T-cell (primary cell): ENCODE measurements at regions of chr6 and their contacts with region 1.

Region 1: DNA sequence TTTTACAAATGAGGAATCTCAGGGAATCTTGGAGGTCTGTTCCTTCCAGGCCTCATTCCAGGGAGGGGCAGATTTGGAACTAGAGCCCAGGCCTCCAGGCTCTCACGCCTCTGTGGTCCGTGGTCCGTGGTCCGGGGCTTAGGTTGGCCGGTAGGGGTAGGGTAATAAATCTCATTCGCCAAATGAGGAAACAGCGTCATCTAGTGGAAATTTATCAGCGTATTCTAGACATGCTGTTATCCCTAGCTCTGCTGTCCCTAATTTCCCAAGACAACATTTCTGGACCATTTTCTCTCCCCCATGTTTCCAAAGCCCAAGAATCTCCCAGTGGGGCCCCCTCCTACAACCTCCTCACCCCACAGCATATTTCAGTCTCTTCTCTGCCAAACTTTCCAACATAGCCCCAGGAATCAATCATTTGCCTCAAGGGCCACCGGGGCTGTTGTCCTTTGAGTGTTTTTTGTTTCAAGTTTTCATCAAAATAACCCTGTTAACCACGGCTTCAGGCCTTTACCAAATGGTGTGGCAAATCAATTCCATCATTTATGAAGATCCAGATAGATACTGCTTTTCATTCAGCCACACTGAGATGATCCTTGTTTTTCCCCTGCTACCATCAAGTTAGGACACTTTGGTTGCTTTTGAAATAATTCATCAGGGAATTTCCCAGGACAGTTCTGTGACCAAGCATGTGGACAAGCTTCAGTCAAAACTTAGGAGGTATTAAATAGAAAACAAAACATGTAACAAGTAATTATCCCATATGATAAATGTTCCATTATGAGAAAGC is 126.8 kb downstream of the ALDH8A1 start:
- DNase-seq: peak in 15 of 35 experiments; percentile 0 to 74 (median 6)
- ATAC-seq: peak; percentile 54 to 91 (median 78)
- H3K4me3 ChIP-seq: no peak overlapping the region
- H3K4me3 Mint-ChIP-seq: no peak overlapping the region
- H3K27ac ChIP-seq: no peak overlapping the region
- H3K27ac Mint-ChIP-seq: no peak overlapping the region
- H3K4me1 ChIP-seq: peaks cover 0 to 2% of the 10 kb centered on the region in 2 experiments
- H3K4me1 Mint-ChIP-seq: peaks cover 0 to 2% (median 0%) of the 10 kb centered on the region in 3 donors
- H3K27me3 ChIP-seq: no peaks in the 10 kb centered on the region
- H3K27me3 Mint-ChIP-seq: peaks cover 0 to 6% of the 10 kb centered on the region in 2 donors

Region 2: GRCh38 chr6:134111062-134111677 is 711.9 kb before region 1 on chr6:
- CTCF ChIA-PET with region 1: interaction called, 3 to 10 read pairs
- POLR2A ChIA-PET with region 1: no interaction called
- DNase-seq: peak in 27 of 35 experiments; percentile 7 to 78 (median 25)
- ATAC-seq: peak; percentile 43 to 57 (median 49)
- H3K4me3 ChIP-seq: no peak overlapping the region
- H3K4me3 Mint-ChIP-seq: no peak overlapping the region
- H3K27ac ChIP-seq: no peak overlapping the region
- H3K27ac Mint-ChIP-seq: no peak overlapping the region
- H3K4me1 ChIP-seq: no peaks in the 10 kb centered on the region
- H3K4me1 Mint-ChIP-seq: peaks cover 0 to 9% (median 3%) of the 10 kb centered on the region in 3 donors
- H3K27me3 ChIP-seq: peaks cover 0 to 18% of the 10 kb centered on the region in 2 experiments
- H3K27me3 Mint-ChIP-seq: peaks cover 15 to 20% of the 10 kb centered on the region in 2 donors

Region 3: DNA sequence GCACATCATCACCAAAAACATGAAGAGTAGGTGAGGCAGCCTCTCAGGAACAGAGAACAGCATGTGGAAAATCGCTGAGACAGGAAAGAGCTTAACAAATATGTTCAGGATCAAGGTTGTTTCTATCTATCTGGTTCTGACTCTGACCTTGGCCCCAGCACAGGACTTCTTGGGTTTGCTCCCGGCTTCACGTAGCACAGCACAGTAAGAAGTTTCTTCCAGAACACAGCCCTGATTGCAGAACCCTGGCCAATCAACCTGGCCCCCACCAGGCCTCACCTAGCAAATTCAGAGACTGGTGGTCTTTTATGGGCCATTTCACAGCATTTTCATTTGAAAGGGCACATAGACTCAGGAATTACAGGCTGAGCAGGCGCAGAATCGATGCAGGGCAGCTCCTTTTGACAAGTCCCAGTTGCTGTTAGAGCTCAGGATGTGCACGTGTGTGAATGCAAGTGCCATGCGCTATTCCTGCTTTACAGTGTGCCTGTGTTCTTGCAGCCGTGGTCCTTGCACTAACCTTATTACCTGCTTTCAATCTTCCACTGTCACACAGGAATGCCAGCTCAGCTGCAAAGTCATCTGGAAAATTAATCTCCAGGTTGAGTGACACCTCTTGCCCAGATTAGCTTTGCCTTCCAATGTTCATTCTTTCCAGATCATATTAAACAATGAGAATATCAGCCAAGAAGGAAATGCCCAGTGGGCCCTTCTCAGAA is 670.2 kb before region 1 on chr6:
- CTCF ChIA-PET with region 1: interaction called, 6 to 27 read pairs
- POLR2A ChIA-PET with region 1: no interaction called
- DNase-seq: no peak
- ATAC-seq: no peak
- H3K4me3 ChIP-seq: no peak overlapping the region
- H3K4me3 Mint-ChIP-seq: no peak overlapping the region
- H3K27ac ChIP-seq: no peak overlapping the region
- H3K27ac Mint-ChIP-seq: no peak overlapping the region
- H3K4me1 ChIP-seq: no peaks in the 10 kb centered on the region
- H3K4me1 Mint-ChIP-seq: no peaks in the 10 kb centered on the region
- H3K27me3 ChIP-seq: peaks cover 0 to 3% of the 10 kb centered on the region in 2 experiments
- H3K27me3 Mint-ChIP-seq: peaks cover 0 to 2% of the 10 kb centered on the region in 2 donors

Region 4: DNA sequence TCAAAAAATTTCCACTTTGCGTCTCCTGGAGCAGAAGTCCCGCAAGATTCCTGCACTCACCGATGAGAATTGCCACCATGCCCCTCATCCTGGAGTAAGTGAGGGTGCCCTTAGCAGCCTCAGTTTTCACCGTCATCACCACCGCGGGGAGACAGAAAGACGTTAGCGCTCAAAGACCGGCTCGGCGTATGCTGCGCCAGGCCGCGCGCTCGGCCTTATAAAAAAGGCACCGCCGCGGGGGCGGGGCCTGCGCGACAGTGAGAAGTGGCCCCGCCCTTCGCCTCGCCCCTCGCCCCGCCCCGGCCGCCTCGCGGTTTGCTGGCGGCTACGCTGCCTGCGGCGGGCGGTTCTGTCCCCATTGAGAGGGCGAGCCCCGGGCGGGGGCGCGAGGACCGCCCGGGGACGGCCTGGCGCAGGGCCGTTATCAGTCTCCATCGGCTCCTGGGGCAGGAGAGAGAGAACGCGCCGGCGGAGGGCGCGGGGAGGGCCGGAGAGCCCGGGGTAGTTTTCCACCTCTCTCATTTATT is 648.4 kb before region 1 on chr6:
- CTCF ChIA-PET with region 1: interaction called in 1 of 2 experiments, 13 read pairs
- POLR2A ChIA-PET with region 1: interaction called in 1 of 2 experiments, 3 read pairs
- DNase-seq: peak; percentile 78 to 97 (median 92)
- ATAC-seq: peak; percentile 75 to 87 (median 80)
- H3K4me3 ChIP-seq: peak overlapping the region; percentile 66 to 78
- H3K4me3 Mint-ChIP-seq: peak overlapping the region; percentile 94 to 99 (median 97)
- H3K27ac ChIP-seq: peak overlapping the region; percentile 82
- H3K27ac Mint-ChIP-seq: peak overlapping the region; percentile 95 to 98
- H3K4me1 ChIP-seq: peaks cover 50 to 57% of the 10 kb centered on the region in 2 experiments
- H3K4me1 Mint-ChIP-seq: peaks cover 74 to 81% (median 75%) of the 10 kb centered on the region in 3 donors
- H3K27me3 ChIP-seq: no peaks in the 10 kb centered on the region
- H3K27me3 Mint-ChIP-seq: no peaks in the 10 kb centered on the region

Region 5: GRCh38 chr6:134657751-134658522 is 165.2 kb before region 1 on chr6:
- CTCF ChIA-PET with region 1: interaction called in 1 of 2 experiments, 10 read pairs
- POLR2A ChIA-PET with region 1: no interaction called
- DNase-seq: no peak
- ATAC-seq: no peak
- H3K4me3 ChIP-seq: no peak overlapping the region
- H3K4me3 Mint-ChIP-seq: no peak overlapping the region
- H3K27ac ChIP-seq: no peak overlapping the region
- H3K27ac Mint-ChIP-seq: no peak overlapping the region
- H3K4me1 ChIP-seq: no peaks in the 10 kb centered on the region
- H3K4me1 Mint-ChIP-seq: peaks cover 0 to 3% (median 0%) of the 10 kb centered on the region in 3 donors
- H3K27me3 ChIP-seq: peaks cover 0 to under 1% of the 10 kb centered on the region in 2 experiments
- H3K27me3 Mint-ChIP-seq: peaks cover 0 to 4% of the 10 kb centered on the region in 2 donors

Region 6: GRCh38 chr6:134757911-134758361 is 65.2 kb before region 1 on chr6:
- CTCF ChIA-PET with region 1: no interaction called
- POLR2A ChIA-PET with region 1: no interaction called
- DNase-seq: no peak
- ATAC-seq: no peak
- H3K4me3 ChIP-seq: no peak overlapping the region
- H3K4me3 Mint-ChIP-seq: no peak overlapping the region
- H3K27ac ChIP-seq: no peak overlapping the region
- H3K27ac Mint-ChIP-seq: no peak overlapping the region
- H3K4me1 ChIP-seq: peaks cover 0 to 1% of the 10 kb centered on the region in 2 experiments
- H3K4me1 Mint-ChIP-seq: peaks cover 0 to 2% (median 0%) of the 10 kb centered on the region in 3 donors
- H3K27me3 ChIP-seq: no peaks in the 10 kb centered on the region
- H3K27me3 Mint-ChIP-seq: peaks cover 2 to 6% of the 10 kb centered on the region in 2 donors

Region 7: GRCh38 chr6:134835993-134836392 is 12.9 kb after region 1 on chr6:
- CTCF ChIA-PET with region 1: no interaction called
- POLR2A ChIA-PET with region 1: no interaction called
- DNase-seq: no peak
- ATAC-seq: no peak
- H3K4me3 ChIP-seq: no peak overlapping the region
- H3K4me3 Mint-ChIP-seq: no peak overlapping the region
- H3K27ac ChIP-seq: no peak overlapping the region
- H3K27ac Mint-ChIP-seq: no peak overlapping the region
- H3K4me1 ChIP-seq: no peaks in the 10 kb centered on the region
- H3K4me1 Mint-ChIP-seq: no peaks in the 10 kb centered on the region
- H3K27me3 ChIP-seq: peaks cover 0 to 2% of the 10 kb centered on the region in 2 experiments
- H3K27me3 Mint-ChIP-seq: peaks cover 0 to 3% of the 10 kb centered on the region in 2 donors